CD14-positive monocyte (primary cell): ENCODE measurements at regions of chr5 and their contacts with region 1.

Region 1: DNA sequence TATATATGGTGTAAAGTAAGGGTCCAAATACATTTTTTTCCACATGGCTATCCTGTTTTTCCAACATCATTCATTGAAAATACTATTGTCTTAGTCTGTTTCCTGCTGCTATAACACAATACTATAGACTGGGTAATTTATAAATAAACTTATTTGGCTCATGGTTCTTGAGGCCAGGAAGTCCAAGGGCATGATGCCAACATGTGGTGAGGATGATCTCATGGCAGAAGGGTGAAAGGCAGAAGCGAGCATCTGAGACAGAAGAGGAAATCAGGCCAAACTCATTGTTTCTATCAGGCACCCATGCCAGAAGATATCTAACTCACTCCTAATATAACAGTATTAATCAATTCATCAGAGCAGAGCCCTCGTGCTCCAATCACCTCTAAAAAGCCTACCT is 42.6 kb downstream of the ANKRD55 start:
- DNase-seq: peak; percentile 82 to 84 (median 83)
- H3K4me3 ChIP-seq: peak overlapping the region in 1 of 3 experiments; percentile 15
- H3K4me3 Mint-ChIP-seq: no peak overlapping the region
- H3K27ac ChIP-seq: peak overlapping the region in 1 of 2 donors; percentile 63
- H3K27ac Mint-ChIP-seq: peak overlapping the region; percentile 59 to 89 (median 82)
- H3K4me1 ChIP-seq: peaks cover 34 to 40% of the 10 kb centered on the region in 2 donors
- H3K4me1 Mint-ChIP-seq: peaks cover 41% of the 10 kb centered on the region
- H3K27me3 ChIP-seq: no peaks in the 10 kb centered on the region
- H3K27me3 Mint-ChIP-seq: peaks cover 0 to 3% (median 1%) of the 10 kb centered on the region in 3 donors
- CTCF ChIP-seq: no peak

Region 2: DNA sequence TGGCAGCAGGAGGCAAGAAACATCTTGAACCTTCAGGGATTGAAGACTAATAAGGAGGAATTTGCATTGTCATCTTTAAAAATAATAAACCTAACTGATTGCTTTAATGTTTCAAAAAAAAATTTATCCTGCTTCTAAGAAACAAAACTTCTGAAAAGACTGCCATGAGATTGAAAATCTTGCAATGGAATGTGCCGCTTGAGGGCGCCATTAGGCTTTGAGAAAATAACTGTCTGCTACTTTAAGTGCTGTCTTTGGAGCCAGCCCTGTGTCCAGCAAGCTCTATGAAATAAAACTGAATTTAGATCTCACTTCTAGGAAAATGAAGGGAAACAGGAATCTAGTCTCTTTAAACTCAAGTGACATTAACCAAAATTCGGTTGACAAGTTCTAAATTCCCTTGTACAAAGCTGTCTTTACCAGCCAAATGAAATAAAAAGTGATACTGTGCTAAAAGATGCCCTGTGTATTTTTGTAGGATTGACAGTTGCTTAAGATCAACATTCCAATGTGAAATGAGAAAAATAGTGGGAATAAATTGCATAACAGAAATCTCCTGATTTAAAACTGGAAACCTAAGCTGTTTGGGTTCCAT is 1284.5 kb before region 1 on chr5:
- intact Hi-C with region 1: no loop called
- DNase-seq: no peak
- H3K4me3 ChIP-seq: no peak overlapping the region
- H3K4me3 Mint-ChIP-seq: no peak overlapping the region
- H3K27ac ChIP-seq: no peak overlapping the region
- H3K27ac Mint-ChIP-seq: no peak overlapping the region
- H3K4me1 ChIP-seq: peaks cover 6% of the 10 kb centered on the region in 2 donors
- H3K4me1 Mint-ChIP-seq: peaks cover 19% of the 10 kb centered on the region
- H3K27me3 ChIP-seq: no peaks in the 10 kb centered on the region
- H3K27me3 Mint-ChIP-seq: peaks cover 7 to 19% (median 11%) of the 10 kb centered on the region in 3 donors
- CTCF ChIP-seq: peak; percentile 50

Region 3: GRCh38 chr5:56155992-56156584 is 34.4 kb before region 1 on chr5:
- intact Hi-C with region 1: loop called (anchors 5 kb)
- DNase-seq: peak; percentile 89 to 95 (median 93)
- H3K4me3 ChIP-seq: peak overlapping the region in 1 of 3 experiments; percentile 54
- H3K4me3 Mint-ChIP-seq: peak overlapping the region in 1 of 2 donors; percentile 77
- H3K27ac ChIP-seq: peak overlapping the region; percentile 88 to 97
- H3K27ac Mint-ChIP-seq: peak overlapping the region; percentile 96 to 100 (median 99)
- H3K4me1 ChIP-seq: peaks cover 87 to 92% of the 10 kb centered on the region in 2 donors
- H3K4me1 Mint-ChIP-seq: peaks cover 86% of the 10 kb centered on the region
- H3K27me3 ChIP-seq: no peaks in the 10 kb centered on the region
- H3K27me3 Mint-ChIP-seq: peaks cover 0 to 4% (median 0%) of the 10 kb centered on the region in 3 donors
- CTCF ChIP-seq: no peak

Region 4: DNA sequence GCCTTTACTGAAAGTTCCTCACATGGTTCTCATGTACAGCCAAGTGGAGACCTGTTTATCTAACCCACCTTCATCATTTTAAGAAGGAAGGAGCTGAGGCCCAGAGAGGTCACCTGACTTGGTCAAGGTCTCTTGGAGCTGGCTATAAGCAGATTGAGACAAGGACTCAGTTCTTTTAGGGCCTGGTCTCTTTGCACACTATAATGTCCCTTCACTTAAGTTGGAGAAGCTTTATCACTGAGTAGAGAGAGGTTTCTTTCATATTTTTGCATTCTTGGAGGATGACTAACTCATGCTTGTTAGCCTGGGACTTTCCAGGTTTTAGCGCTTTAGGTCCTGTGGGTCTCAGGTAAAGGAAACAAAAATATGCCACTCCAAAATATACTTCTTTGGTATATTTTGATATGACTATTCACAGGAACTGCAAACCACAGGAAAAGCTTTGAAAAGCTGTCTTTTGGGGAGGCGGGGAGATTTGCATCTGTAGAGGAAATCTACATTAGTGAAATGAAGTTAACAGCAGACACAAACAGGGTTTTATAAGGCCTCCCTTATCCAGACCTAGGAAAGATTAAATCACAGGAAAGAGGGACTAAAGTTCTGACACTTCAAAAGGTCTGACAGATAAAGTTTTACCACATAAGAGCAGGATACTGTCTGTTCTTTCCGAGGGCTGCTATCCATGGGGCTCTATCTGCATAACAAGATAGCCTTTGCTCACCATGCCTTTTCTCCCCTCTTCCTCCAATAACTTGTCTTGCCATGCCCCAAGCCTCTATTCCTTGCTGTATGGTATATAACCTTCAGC is 138.5 kb after region 1 on chr5:
- intact Hi-C with region 1: no loop called
- DNase-seq: peak in 1 of 3 donors; percentile 27
- H3K4me3 ChIP-seq: no peak overlapping the region
- H3K4me3 Mint-ChIP-seq: no peak overlapping the region
- H3K27ac ChIP-seq: no peak overlapping the region
- H3K27ac Mint-ChIP-seq: no peak overlapping the region
- H3K4me1 ChIP-seq: peaks cover 12 to 17% of the 10 kb centered on the region in 2 donors
- H3K4me1 Mint-ChIP-seq: peaks cover 32% of the 10 kb centered on the region
- H3K27me3 ChIP-seq: no peaks in the 10 kb centered on the region
- H3K27me3 Mint-ChIP-seq: peaks cover 0 to 2% (median 0%) of the 10 kb centered on the region in 3 donors
- CTCF ChIP-seq: no peak